Ovary (tissue), 10 donors: ENCODE measurements at regions of chr10 and their contacts with region 1.

Region 1: DNA sequence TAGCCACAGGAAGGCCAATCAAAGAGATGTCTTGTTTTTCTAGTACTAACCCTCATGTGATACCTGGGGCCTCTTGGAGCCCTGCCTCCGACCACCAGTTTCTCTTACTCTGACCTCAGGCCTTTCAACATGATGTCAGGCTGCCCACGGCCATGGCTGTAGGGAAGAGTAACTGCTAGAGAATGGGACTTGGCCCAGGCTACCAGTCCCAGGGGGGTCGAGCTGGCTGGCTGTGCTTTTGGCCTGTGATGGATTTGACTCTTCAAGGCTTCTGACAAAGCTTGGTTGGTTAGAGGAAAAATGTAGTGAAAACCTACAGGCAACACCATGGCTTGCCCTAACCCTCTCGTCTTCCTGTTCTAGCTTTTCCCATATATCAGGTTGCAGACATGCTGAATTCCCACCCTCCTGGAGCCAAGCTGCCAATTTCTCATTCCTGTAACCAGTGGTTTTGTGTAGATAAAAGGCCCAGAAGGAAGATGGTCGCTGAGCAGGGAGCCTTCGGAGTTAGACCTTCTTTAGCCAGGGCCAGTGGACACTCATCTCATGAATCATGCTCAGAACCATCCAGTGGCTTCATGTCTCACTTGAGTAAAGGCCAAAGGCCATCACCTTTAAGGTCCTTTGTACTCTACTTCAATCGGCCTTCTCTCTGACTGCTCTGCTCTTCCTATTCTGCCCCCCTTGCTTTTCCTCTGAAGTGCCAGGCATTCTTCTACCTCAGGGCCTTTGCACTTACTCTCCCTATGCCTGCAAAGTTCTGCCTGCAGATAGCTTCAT is 19.7 kb downstream of the SUFU start:
- DNase-seq: no peak
- H3K4me3 ChIP-seq: no peak overlapping the region
- H3K27ac ChIP-seq: no peak overlapping the region
- H3K4me1 ChIP-seq: peaks cover 5% of the 10 kb centered on the region
- H3K27me3 ChIP-seq: no peaks in the 10 kb centered on the region
- CTCF ChIP-seq: no peak
- EP300 ChIP-seq: no peak
- POLR2A ChIP-seq: no peak

Region 2: GRCh38 chr10:102555781-102556328 is 32.4 kb after region 1 on chr10:
- intact Hi-C with region 1: loop called in 1 of 4 experiments (anchors 5 kb)
- DNase-seq: peak in 1 of 5 donors; percentile 12
- H3K4me3 ChIP-seq: no peak overlapping the region
- H3K27ac ChIP-seq: no peak overlapping the region
- H3K4me1 ChIP-seq: peaks cover 3% of the 10 kb centered on the region
- H3K27me3 ChIP-seq: no peaks in the 10 kb centered on the region
- CTCF ChIP-seq: no peak
- EP300 ChIP-seq: no peak
- POLR2A ChIP-seq: no peak

Region 3: DNA sequence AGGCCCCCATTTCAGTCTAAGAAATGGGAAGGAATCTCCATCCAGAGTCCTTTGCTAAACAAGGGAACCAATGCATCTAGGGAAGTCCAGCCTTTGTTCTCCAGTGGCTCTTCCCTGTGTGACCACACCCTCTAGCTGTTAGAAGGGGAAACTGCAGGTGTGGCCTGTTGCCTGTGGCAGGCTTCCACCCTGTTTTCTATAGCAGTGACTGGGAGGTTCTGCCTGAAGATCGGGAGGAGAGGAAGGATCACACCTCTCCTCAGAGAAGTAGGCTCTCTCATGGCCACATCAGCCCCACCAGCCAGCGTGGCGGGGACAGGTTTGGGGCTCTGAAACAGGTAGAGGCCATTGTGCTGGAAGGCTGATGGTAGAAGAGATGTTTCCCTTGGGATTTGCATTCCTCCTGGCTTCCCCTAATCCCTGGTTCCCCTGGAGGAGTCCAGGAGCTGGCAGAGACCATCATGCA is 73.1 kb after region 1 on chr10:
- intact Hi-C with region 1: no loop called
- DNase-seq: peak in 2 of 5 donors; percentile 28 to 56
- H3K4me3 ChIP-seq: no peak overlapping the region
- H3K27ac ChIP-seq: no peak overlapping the region
- H3K4me1 ChIP-seq: no peaks in the 10 kb centered on the region
- H3K27me3 ChIP-seq: no peaks in the 10 kb centered on the region
- CTCF ChIP-seq: peak in 2 of 3 donors; percentile 39 to 54
- EP300 ChIP-seq: no peak
- POLR2A ChIP-seq: no peak